Astrocyte of the cerebellum (primary cell): ENCODE measurements at regions of chr1 and their contacts with region 1.

Region 1: DNA sequence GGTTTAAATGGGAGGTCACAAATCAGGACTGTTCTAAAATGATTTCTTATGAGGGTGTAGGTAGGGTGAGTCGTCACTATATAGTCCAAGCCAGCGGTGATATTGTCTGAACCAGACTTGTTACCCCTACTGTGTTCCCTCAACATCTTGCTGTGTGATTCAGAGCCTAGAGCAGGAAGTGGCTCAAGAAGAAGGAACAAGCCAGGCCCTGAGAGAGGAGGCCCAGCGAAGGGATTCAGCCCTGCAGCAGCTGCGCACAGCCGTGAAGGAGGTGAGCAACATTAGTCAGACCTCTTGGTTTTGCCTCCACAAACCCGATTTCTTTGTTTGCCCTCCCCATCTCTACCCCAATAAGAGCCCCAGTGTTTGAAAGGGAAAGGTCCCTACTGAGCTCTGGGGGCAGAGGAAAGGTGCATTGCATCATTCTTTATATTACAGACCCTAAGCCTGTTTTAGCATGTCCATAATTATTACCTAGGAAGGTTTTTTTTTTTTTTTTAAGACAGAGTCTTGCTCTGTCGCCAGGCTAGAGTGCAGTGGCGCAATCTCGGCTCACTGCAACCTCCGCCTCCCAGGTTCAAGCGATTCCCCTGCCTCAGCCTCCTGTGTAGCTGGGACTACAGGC is 5.0 kb upstream of the SH3BGRL3 start:
- DNase-seq: no peak
- H3K4me3 ChIP-seq: no peak overlapping the region
- CTCF ChIP-seq: no peak

Region 2: GRCh38 chr1:26234644-26235370 is 40.1 kb before region 1 on chr1:
- in situ Hi-C with region 1: loop called (anchors 5 kb)
- DNase-seq: no peak
- H3K4me3 ChIP-seq: peak overlapping the region; percentile 86
- CTCF ChIP-seq: peak; percentile 3

Region 3: GRCh38 chr1:26336477-26337205 is 61.7 kb after region 1 on chr1:
- in situ Hi-C with region 1: loop called (anchors 5 kb)
- DNase-seq: no peak
- H3K4me3 ChIP-seq: peak overlapping the region; percentile 49
- CTCF ChIP-seq: no peak